ENCODE measurements at regions of chr10 and their contacts with region 1.

Region 1: DNA sequence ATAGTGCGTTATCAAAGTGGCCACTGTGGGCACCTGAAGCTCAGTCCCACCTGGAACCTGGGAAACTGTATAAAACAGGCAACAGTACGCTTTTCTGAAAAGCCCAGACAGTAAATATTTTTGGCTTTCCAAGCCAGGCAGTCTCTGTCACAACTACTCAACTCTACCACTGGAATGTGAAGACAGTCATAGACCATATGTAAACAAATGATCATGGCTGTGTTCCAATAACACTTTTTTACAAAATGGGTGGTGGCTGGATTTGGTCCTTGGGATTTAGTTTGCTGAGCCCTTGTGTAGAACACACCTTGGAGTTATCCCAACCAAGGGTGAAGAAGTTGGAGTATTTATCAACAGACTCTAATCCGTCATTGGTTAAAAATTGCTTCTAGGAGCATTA is 259.9 kb downstream of the SKIDA1 start:
- ATAC-seq: peak in 3 of 8 experiments; percentile 24 to 77 (median 65)
- H3K4me3 ChIP-seq: no peak overlapping the region
- H3K27ac ChIP-seq: no peak overlapping the region
- H3K4me1 ChIP-seq: peaks cover 5 to 28% of the 10 kb centered on the region in 2 donors

Region 2: DNA sequence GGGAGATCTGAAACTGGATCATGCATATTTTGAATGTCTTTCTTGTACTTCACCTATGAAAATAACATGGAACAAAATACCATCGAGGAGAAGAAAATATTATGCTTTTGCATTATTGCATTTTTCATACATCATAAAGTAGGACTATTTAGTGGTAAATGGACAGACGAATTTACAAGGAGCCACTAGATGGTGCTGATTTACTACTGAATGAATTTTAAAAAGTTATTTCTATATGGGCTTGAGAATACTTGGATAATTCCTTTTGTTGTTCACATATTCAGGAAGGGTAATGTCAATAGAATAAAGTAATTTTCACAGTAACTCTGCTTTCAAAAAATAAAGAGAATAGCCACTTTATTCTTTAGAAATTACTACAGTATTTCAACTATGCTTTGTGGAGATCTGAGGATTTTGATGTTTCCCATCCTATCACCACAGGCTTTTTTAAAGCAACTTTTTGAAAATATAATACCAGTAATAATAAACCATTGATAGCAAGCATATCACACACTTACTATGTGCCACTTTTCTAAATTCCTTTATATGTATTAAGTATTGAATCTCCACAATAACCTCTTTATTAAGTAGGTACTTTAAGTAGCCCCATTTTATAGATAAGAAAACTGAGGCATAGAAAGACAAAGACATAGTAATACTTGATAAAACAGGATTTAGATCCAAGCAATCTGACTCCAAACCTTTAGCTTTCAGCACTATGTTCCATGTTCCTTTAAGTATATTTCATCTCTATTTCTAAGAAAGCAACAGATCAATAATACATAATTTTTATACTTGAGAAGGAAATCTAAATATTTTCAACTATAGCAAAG is 407.1 kb before region 1 on chr10:
- in situ Hi-C with region 1: loop called in 5 of 9 experiments (anchors 10 to 25 kb)
- ATAC-seq: peak in 3 of 8 experiments; percentile 25 to 68 (median 55)
- H3K4me3 ChIP-seq: no peak overlapping the region
- H3K27ac ChIP-seq: no peak overlapping the region
- H3K4me1 ChIP-seq: no peaks in the 10 kb centered on the region

Region 3: DNA sequence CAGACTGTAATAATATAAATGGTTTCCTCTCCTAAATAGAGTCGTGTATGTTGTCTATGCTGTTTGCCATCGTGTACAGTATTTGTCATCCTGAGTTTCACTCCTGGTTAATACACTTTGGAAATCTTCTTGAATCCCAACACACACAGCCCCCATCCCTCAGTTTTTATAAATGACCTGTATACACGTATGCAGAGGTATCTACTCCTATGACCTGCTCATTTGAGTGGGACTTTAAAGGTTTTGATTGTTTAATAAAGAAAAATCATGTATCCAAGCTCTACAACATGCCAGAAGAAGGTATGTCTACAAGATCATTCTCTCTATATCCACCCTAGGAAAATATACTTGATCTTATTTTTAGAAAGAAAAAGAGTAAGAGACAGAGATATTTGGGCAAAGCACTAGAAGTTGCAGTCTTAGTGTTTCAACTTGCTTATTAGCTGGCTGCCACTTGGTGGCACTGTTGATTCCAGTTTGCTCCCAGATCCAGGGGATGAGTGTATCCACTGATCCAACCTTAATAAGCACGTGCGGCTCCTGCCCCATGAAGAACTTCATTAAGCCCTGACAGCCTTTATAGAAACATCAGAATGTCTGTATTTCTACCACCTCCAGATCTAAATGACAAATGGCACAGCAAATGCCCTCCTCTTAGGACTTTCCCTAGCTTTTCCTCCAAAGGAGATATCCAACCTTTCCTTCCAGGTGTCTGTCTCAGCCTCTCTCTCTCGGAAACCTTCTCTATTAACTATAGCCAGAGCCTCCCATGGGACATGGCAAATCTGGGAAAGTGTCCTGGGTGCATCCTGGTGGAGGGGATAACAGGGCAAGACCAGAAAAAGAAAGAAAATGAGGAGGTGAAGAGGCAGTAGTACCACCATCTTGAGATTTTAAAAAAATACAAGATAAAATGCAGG is 187.0 kb before region 1 on chr10:
- in situ Hi-C with region 1: loop called in 5 of 9 experiments (anchors 10 to 25 kb)
- ATAC-seq: peak; percentile 83 to 97 (median 91)
- H3K4me3 ChIP-seq: no peak overlapping the region
- H3K27ac ChIP-seq: no peak overlapping the region
- H3K4me1 ChIP-seq: peaks cover 0 to 9% of the 10 kb centered on the region in 2 donors

Region 4: GRCh38 chr10:21083871-21084295 is 181.7 kb before region 1 on chr10:
- in situ Hi-C with region 1: loop called in 5 of 9 experiments (anchors 10 to 25 kb)
- ATAC-seq: peak in 1 of 8 experiments; percentile 23
- H3K4me3 ChIP-seq: no peak overlapping the region
- H3K27ac ChIP-seq: no peak overlapping the region
- H3K4me1 ChIP-seq: peaks cover 0 to 4% of the 10 kb centered on the region in 2 donors

Region 5: DNA sequence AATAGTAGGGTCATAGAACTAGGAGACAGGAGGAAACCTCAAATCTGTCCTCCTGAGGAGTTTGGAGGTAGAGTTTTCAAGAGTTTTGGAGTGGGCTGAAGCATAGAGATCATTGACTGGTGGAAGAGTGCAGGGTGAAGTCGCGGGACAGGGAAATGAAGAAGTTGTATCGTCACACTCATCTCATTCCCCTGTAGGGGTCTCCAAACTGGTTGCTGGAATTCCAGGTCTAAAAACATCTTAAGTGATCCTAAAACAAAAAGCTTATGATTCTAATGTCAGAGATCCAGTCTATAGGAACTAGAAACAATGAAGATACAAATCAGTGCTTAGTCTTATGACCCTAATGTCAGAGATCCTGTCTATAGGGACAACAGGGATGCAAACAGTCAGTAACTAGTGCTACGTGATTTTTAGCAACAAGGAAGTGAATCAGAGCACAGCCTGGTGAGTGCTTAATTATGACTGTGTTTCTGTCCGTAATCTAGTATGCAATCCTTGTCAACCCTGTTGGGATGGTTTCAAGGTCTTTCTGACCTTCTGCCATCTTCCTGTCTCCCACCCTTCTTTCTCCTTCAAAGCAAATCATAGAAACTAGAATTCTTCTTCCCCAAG is 120.5 kb after region 1 on chr10:
- in situ Hi-C with region 1: no loop called
- ATAC-seq: no peak
- H3K4me3 ChIP-seq: no peak overlapping the region
- H3K27ac ChIP-seq: no peak overlapping the region
- H3K4me1 ChIP-seq: peaks cover 15 to 16% of the 10 kb centered on the region in 2 donors

Region 6: GRCh38 chr10:21510241-21511074 is 244.8 kb after region 1 on chr10:
- in situ Hi-C with region 1: no loop called
- ATAC-seq: peak in 6 of 8 experiments; percentile 21 to 56 (median 43)
- H3K4me3 ChIP-seq: peak overlapping the region; percentile 33 to 92 (median 67)
- H3K27ac ChIP-seq: peak overlapping the region; percentile 87 to 96
- H3K4me1 ChIP-seq: peaks cover 37 to 58% of the 10 kb centered on the region in 2 donors